ENCODE measurements at regions of chr4 and their contacts with region 1.

Region 1: DNA sequence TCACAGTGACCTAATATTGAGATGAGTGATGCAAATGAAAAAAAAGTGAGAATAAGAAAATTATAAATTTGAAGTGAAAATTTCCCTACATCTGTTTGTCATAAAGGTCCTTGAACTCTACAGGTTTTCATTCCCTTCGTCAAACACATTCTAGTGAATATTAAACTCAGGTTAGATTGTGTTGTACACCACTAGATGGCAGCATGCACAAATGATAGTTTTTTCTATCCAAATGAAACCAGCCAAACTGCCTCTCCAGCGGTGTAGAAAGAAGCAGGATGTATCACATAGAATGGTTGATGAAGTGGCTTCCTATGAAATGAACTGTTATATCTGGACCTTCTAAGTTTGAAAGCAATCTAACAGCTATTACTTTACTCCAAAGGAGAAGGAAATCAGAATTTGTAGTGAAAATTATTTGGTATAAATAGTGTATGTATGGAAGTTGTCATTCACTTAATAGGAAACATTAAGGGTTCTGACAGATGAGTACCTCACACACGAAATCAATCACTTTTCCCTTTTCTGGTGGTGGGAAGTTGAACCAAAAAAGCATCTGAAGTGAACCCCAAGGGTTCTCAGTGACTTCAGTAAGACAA is 382.7 kb downstream of the UNC5C start:
- DNase-seq: peak; percentile 74
- H3K4me3 ChIP-seq: no peak overlapping the region
- H3K27ac ChIP-seq: no peak overlapping the region
- H3K4me1 ChIP-seq: no peaks in the 10 kb centered on the region
- H3K27me3 ChIP-seq: no peaks in the 10 kb centered on the region
- CTCF ChIP-seq: peak; percentile 31
- POLR2A ChIP-seq: no peak

Region 2: DNA sequence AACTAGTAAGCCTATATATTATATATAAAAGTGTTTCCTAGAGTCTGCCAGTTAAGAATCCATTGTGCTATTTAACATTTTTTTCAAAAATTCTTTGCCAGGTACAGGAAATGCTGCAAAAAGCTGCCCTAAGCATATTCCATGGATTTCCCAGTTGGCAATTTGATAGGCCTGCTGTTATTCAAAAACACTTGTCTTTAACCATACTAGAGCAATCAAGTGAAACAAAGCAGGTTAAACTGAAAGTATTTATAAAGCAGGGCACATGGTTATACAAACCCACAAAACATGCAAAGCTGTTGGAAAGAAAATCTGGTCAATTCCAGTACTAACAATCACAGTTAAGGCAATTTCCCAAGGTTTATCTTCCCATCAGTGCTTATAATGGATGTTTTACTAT is 222.9 kb after region 1 on chr4:
- CTCF ChIA-PET with region 1: no interaction called
- POLR2A ChIA-PET with region 1: no interaction called
- dilution Hi-C with region 1: no loop called
- intact Hi-C with region 1: no loop called
- DNase-seq: no peak
- H3K4me3 ChIP-seq: no peak overlapping the region
- H3K27ac ChIP-seq: no peak overlapping the region
- H3K4me1 ChIP-seq: no peaks in the 10 kb centered on the region
- H3K27me3 ChIP-seq: no peaks in the 10 kb centered on the region
- CTCF ChIP-seq: no peak
- POLR2A ChIP-seq: no peak

Region 3: DNA sequence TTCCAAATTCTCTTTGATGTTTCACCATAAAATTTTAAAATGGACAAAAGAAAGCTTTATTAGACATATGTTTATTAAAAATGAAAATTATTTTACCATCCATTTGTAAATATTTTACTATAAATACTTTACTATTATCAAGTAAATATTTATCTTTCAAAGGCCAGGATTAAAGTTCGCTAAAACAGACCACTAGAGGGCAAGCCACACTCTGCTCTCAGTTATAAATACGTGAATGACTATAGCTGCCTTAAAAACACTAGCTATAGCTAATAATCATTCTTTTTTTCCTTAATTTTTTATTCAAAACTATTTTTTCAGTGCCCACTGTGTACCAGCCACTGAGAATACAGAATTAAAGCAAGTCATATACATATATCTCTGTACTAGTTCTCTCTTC is 344.1 kb after region 1 on chr4:
- CTCF ChIA-PET with region 1: interaction called, 4 read pairs
- POLR2A ChIA-PET with region 1: no interaction called
- dilution Hi-C with region 1: no loop called
- intact Hi-C with region 1: loop called (anchors 2 kb)
- DNase-seq: peak; percentile 52
- H3K4me3 ChIP-seq: no peak overlapping the region
- H3K27ac ChIP-seq: no peak overlapping the region
- H3K4me1 ChIP-seq: peaks cover 37% of the 10 kb centered on the region
- H3K27me3 ChIP-seq: no peaks in the 10 kb centered on the region
- CTCF ChIP-seq: peak; percentile 45 to 52
- POLR2A ChIP-seq: no peak

Region 4: GRCh38 chr4:95693594-95693993 is 527.6 kb after region 1 on chr4:
- CTCF ChIA-PET with region 1: no interaction called
- POLR2A ChIA-PET with region 1: no interaction called
- dilution Hi-C with region 1: no loop called
- intact Hi-C with region 1: loop called (anchors 5 kb)
- DNase-seq: peak; percentile 36
- H3K4me3 ChIP-seq: no peak overlapping the region
- H3K27ac ChIP-seq: peak overlapping the region; percentile 88
- H3K4me1 ChIP-seq: peaks cover 14% of the 10 kb centered on the region
- H3K27me3 ChIP-seq: no peaks in the 10 kb centered on the region
- CTCF ChIP-seq: peak in 1 of 2 donors; percentile 16
- POLR2A ChIP-seq: no peak

Region 5: DNA sequence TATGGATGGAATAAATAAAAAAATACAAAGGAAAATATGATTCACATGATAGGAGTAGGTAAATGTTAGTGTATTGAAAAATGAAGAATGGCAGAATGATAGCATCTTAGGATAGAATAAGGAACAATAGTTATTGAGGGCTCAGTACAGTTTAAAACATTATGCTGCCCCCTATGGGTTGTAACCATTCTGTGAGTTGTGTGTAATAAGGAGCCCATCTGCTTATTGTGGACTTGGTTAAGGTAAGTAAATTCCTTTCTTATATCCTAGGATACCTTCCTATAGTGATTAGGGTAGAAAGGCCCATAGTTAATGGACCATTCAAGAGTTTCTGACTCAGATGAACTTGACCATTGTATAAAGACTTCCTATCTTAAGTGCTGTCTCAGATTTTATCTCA is 869.7 kb after region 1 on chr4:
- CTCF ChIA-PET with region 1: interaction called, 9 read pairs
- POLR2A ChIA-PET with region 1: no interaction called
- dilution Hi-C with region 1: no loop called
- intact Hi-C with region 1: loop called (anchors 2 kb)
- DNase-seq: peak; percentile 49
- H3K4me3 ChIP-seq: no peak overlapping the region
- H3K27ac ChIP-seq: no peak overlapping the region
- H3K4me1 ChIP-seq: no peaks in the 10 kb centered on the region
- H3K27me3 ChIP-seq: no peaks in the 10 kb centered on the region
- CTCF ChIP-seq: peak; percentile 10 to 27
- POLR2A ChIP-seq: no peak

Measured in endothelial cell of umbilical vein (primary cell).